Endothelial cell of umbilical vein (primary cell): ENCODE measurements at regions of chr7 and their contacts with region 1.

Region 1: DNA sequence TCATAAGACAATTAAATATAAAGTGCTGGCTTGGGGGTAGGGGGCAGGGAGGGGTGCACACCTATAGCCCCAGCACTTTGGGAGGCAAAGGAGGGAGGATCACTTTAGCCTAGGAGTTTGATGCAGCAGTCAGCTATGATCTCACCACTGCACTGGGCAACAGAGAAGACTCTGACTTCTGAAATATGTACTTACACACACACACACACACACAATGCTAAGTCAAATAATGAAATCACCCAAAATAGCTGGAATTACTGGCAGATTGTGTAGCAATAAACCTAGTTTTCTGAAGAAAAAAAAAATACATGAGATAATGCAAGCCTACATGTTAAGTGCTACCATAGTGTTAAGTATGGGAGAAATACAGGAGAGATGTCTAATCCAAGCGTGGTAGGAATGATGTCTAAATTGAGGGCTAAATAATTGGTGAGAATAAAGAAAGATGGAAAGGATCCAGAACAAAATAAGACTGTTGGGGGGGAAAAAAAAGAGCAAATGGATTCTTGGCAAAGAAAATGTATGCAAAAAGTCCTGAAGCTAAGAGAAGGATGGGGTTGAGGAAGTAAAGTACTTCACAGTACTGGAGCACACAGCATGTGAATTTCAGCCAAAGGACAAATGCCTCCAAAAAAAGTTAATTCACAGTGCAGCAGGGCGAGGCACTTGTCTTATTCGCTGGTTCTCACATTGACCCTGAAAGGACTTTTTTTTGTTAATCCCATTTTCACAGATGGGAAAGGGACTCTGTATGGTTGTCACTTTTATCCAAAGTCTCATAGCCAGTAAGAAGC is 73.9 kb downstream of the IGF2BP3 start:
- DNase-seq: no peak
- H3K4me3 ChIP-seq: no peak overlapping the region
- H3K27ac ChIP-seq: no peak overlapping the region
- H3K4me1 ChIP-seq: no peaks in the 10 kb centered on the region
- H3K27me3 ChIP-seq: no peaks in the 10 kb centered on the region
- CTCF ChIP-seq: no peak
- POLR2A ChIP-seq: no peak

Region 2: GRCh38 chr7:23410446-23411183 is 14.2 kb after region 1 on chr7:
- CTCF ChIA-PET with region 1: no interaction called
- POLR2A ChIA-PET with region 1: no interaction called
- dilution Hi-C with region 1: no loop called
- intact Hi-C with region 1: loop called (anchors 2 kb)
- DNase-seq: no peak
- H3K4me3 ChIP-seq: no peak overlapping the region
- H3K27ac ChIP-seq: no peak overlapping the region
- H3K4me1 ChIP-seq: no peaks in the 10 kb centered on the region
- H3K27me3 ChIP-seq: no peaks in the 10 kb centered on the region
- CTCF ChIP-seq: no peak
- POLR2A ChIP-seq: no peak